ENCODE measurements at regions of chr2 and their contacts with region 1.

Region 1: DNA sequence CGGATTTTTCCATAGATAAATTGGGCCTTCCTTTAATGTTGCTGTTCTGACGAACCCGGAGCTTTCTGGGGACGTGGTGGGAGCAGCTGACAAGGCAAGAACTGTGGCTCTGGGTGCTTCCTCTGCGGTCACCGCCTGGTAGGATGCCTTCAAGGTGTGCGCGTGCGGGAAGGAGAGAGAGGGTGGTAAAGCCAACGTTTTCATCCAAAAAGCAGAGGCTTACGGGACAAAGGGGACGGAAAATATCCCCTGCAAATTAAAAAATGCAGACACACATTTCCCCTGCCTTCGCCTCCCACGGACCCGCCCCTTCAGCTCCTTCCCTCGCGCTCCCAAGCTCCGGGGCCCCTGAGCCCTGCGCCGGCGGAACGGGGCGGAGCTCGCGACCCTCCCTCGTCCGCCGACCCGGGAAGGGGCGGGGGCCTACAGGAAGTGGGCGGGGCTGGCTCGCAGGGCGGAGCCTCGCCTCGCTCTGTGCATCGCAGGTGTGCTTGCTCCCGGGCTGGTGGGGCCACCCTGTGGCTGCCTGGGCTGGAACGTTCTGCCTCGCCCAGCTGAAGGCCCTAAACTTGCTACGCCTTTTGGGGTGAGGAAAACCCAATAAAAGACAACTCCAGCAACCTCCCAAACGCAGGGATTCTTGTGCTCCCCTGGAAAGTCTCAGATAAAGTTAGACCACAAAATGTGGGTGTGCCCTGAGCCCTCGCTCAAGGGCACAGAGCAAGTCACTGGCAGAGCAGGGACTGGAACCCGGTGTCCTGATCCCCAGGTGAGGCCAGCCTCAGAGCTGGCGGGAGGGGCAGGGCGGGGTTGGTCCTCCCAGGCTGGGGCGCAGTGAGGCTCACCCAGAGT is 25.4 kb upstream of the SLC66A3 start:
- DNase-seq: peak; percentile 89
- H3K4me3 ChIP-seq: peak overlapping the region; percentile 50
- H3K27ac ChIP-seq: no peak overlapping the region
- H3K4me1 ChIP-seq: peaks cover 27% of the 10 kb centered on the region
- CTCF ChIP-seq: peak; percentile 78

Region 2: DNA sequence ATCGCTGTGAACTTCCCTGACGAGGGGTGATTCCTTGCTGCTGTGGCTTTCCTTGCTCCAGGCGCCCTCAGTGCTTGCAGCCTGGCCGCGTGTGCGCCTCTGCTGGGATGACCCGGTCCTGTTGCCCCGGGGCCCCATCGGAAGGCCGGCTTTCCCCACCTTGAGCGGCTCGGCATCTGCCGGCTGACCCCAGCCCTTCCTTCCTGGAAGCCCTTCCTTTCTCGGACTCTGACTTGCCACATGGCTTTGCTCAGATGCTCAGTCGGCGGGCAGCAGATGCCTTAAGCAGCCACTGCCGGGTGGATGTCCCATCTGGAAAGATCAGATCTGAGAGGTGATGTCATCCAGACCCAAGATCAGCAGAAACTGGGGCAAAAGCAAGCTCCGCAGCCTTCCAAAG is 581.2 kb before region 1 on chr2:
- CTCF ChIA-PET with region 1: no interaction called
- POLR2A ChIA-PET with region 1: no interaction called
- intact Hi-C with region 1: no loop called
- DNase-seq: no peak
- H3K4me3 ChIP-seq: no peak overlapping the region
- H3K27ac ChIP-seq: no peak overlapping the region
- H3K4me1 ChIP-seq: no peaks in the 10 kb centered on the region
- CTCF ChIP-seq: no peak

Region 3: DNA sequence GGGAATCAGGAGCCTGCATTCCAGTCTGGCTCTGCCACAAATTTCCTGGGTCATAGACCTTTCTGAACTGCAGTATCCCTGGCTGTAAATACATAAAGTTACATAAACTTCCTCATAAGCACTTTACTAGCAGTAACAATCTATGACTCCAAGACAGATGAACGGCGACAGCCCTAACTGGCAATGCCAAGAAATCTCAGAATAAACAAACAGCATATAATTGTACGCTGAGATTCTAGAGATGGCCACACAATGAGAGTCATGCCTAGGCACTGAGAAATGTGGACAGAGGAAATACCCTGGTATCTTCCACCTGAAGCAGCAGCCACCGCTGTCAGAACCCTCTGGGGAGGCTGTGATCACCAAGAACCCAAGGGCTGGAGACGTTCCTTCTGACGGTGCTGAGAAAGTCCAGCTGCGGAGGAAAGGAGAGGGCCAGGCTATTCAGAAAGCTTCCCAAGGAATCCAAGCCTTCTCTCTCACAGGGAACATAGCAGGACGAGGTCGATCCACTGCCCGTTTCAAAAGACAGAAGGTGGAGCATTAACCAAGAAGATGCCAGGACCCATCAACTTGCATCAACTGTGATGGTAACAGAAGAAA is 63.8 kb before region 1 on chr2:
- CTCF ChIA-PET with region 1: no interaction called
- POLR2A ChIA-PET with region 1: no interaction called
- intact Hi-C with region 1: no loop called
- DNase-seq: no peak
- H3K4me3 ChIP-seq: no peak overlapping the region
- H3K27ac ChIP-seq: no peak overlapping the region
- H3K4me1 ChIP-seq: no peaks in the 10 kb centered on the region
- CTCF ChIP-seq: no peak

Region 4: DNA sequence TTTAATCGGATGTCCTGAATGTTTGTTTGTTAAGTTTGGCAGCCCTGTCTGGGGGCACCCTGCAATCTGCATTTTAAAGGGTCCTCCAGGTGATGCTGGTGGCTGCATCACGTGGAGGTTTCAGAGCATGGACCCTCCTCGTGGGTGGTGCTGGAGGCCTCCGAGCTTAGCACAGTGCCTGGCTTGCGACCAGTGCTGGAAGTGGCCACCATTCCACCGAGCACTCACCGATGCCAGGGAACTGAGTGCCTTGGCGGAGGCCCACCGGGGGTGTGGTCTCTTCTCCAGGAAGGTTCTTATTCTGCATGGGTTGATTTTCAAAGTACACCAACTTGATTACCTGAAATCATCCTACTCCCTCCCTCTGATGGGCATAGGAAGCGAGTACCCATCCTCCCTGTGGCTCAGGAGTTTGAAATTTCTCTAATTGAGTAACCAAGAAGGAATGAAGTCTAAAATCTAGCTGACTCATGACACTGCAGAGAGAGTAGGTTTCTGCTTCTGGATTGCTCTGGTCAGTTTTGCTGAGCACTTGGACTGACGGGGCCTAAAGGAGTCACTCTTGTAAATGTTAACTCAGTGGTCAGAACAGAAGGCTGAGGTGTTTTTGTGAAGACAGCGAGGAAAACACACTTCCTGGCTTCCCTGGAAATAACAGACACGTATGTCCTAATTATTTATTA is 32.6 kb before region 1 on chr2:
- CTCF ChIA-PET with region 1: no interaction called
- POLR2A ChIA-PET with region 1: no interaction called
- intact Hi-C with region 1: no loop called
- DNase-seq: no peak
- H3K4me3 ChIP-seq: no peak overlapping the region
- H3K27ac ChIP-seq: no peak overlapping the region
- H3K4me1 ChIP-seq: no peaks in the 10 kb centered on the region
- CTCF ChIP-seq: no peak

Region 5: GRCh38 chr2:11215407-11215806 is 85.6 kb after region 1 on chr2:
- CTCF ChIA-PET with region 1: interaction called, 11 read pairs
- POLR2A ChIA-PET with region 1: no interaction called
- intact Hi-C with region 1: no loop called
- DNase-seq: no peak
- H3K4me3 ChIP-seq: no peak overlapping the region
- H3K27ac ChIP-seq: no peak overlapping the region
- H3K4me1 ChIP-seq: no peaks in the 10 kb centered on the region
- CTCF ChIP-seq: no peak

Region 6: DNA sequence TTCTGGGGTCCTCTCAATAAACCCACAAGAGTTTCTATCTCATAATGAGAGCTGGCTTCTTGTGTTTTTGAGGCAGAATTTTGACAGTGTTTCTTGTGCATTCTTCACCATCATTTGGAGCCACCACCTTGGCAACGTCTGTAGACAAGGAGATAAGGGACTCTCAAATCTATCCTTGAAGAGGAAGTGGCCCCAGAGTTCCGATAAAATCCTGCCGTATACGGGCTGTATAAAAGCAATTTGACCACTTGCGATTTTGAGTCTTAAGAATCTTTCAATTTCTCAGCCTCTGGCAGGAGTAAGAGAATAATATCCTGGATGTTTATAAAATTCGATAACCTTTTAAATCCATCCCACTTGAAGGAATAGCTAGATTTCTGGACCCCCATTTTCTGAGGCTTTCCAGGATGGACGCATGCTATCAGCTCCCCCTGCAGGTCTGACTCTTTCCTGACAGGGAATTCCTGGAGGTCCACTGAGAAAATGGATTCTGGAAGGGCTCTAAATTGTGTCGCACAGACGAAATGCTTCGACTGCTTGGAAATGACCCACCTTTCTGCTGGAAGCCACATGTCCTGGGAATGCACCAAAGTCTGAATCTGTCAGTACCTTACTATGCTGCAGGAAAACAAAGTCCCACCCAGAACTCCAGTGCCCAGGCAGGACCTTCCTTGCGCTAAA is 282.1 kb after region 1 on chr2:
- CTCF ChIA-PET with region 1: interaction called, 12 read pairs
- POLR2A ChIA-PET with region 1: no interaction called
- intact Hi-C with region 1: loop called (anchors 1 kb)
- DNase-seq: peak; percentile 39
- H3K4me3 ChIP-seq: peak overlapping the region; percentile 34
- H3K27ac ChIP-seq: no peak overlapping the region
- H3K4me1 ChIP-seq: peaks cover 6% of the 10 kb centered on the region
- CTCF ChIP-seq: peak; percentile 82

Region 7: DNA sequence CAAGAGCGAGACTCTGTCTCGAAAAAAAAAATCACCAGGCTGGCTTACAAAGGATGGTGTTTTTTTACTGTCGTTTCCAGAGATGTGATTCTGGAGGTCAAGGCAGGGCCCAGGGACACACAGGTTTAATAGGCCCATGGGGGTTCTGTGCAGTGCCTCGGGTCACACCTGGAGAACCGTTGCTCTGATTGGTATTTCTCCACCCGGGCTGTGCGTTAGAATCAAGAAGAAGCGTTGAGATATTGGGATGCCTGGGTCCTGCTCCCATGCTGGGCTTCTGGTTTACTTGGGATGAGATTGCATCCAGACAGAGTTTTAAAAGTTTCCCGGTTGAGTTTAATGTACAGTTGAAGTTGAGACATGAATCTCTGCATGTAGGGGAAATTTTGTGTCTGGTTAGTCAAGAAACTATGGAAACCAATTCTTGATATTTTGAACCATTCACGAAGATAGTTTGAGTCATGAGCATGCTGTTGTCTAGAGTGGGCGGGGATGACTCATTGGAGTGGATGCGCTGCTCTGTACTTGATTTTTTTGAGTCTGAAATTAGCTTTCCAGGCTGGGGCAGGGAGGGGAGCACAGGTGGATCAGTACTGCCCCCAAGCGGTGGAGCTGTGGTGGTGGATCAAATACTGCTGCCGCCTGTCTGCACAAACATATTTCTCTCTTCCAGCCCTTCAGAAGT is 454.2 kb after region 1 on chr2:
- CTCF ChIA-PET with region 1: interaction called, 5 read pairs
- POLR2A ChIA-PET with region 1: no interaction called
- intact Hi-C with region 1: loop called (anchors 1 kb)
- DNase-seq: peak; percentile 59
- H3K4me3 ChIP-seq: no peak overlapping the region
- H3K27ac ChIP-seq: no peak overlapping the region
- H3K4me1 ChIP-seq: no peaks in the 10 kb centered on the region
- CTCF ChIP-seq: peak; percentile 94